H1 (cell line): ENCODE measurements at regions of chr6 and their contacts with region 1.

Region 1: GRCh38 chr6:75893058-75893775 is 144.2 kb downstream of the MYO6 start:
- DNase-seq: no peak
- H3K4me3 ChIP-seq: no peak overlapping the region
- H3K27ac ChIP-seq: no peak overlapping the region
- H3K4me1 ChIP-seq: no peaks in the 10 kb centered on the region
- H3K27me3 ChIP-seq: no peaks in the 10 kb centered on the region
- CTCF ChIP-seq: peak in 2 of 3 experiments; percentile 37 to 68; a peak in 2 of 4 replicates
- EP300 ChIP-seq: no peak
- POLR2A ChIP-seq: no peak
- RAD21 ChIP-seq: peak; percentile 80 to 84

Region 2: DNA sequence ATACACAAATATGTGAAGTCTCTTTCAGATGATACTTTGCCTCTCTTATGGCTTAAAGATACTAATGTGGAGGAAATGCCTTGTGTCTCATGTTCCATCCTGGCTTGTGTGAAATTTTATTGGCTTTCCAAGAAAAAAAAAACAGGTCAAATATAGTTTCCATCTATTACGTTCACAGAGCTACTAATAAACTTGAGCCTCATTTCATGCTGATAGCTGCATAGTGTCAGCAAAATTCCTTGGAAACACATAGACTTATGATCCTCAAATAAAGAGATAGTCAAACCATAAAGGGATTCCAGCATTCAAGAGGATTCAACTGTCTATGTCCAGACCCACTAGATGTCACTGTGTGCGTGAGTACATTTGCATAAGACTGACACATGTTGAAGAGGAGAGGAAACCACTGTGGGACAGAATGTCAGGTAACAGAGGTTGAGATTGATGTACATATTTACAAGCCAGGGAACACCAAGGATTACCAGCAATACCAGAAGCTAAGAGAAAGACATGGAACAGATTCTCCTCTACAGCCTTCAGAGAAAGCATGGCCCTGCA is 954.0 kb before region 1 on chr6:
- CTCF ChIA-PET with region 1: no interaction called
- POLR2A ChIA-PET with region 1: no interaction called
- DNase-seq: no peak
- H3K4me3 ChIP-seq: no peak overlapping the region
- H3K27ac ChIP-seq: no peak overlapping the region
- H3K4me1 ChIP-seq: no peaks in the 10 kb centered on the region
- H3K27me3 ChIP-seq: no peaks in the 10 kb centered on the region
- CTCF ChIP-seq: no peak
- EP300 ChIP-seq: no peak
- POLR2A ChIP-seq: no peak
- RAD21 ChIP-seq: no peak

Region 3: GRCh38 chr6:75874224-75874623 is 19.0 kb before region 1 on chr6:
- CTCF ChIA-PET with region 1: interaction called, 18 read pairs
- POLR2A ChIA-PET with region 1: no interaction called
- DNase-seq: no peak
- H3K4me3 ChIP-seq: no peak overlapping the region
- H3K27ac ChIP-seq: no peak overlapping the region
- H3K4me1 ChIP-seq: peaks cover 0 to 7% (median 0%) of the 10 kb centered on the region in 4 experiments; a peak in 1 of 7 replicates
- H3K27me3 ChIP-seq: no peaks in the 10 kb centered on the region
- CTCF ChIP-seq: no peak
- EP300 ChIP-seq: no peak
- POLR2A ChIP-seq: no peak
- RAD21 ChIP-seq: no peak

Region 4: GRCh38 chr6:75906871-75907270 is 13.7 kb after region 1 on chr6:
- CTCF ChIA-PET with region 1: interaction called, 22 read pairs
- POLR2A ChIA-PET with region 1: interaction called, 3 read pairs
- DNase-seq: no peak
- H3K4me3 ChIP-seq: no peak overlapping the region
- H3K27ac ChIP-seq: no peak overlapping the region
- H3K4me1 ChIP-seq: no peaks in the 10 kb centered on the region
- H3K27me3 ChIP-seq: no peaks in the 10 kb centered on the region
- CTCF ChIP-seq: no peak
- EP300 ChIP-seq: no peak
- POLR2A ChIP-seq: no peak
- RAD21 ChIP-seq: no peak

Region 5: DNA sequence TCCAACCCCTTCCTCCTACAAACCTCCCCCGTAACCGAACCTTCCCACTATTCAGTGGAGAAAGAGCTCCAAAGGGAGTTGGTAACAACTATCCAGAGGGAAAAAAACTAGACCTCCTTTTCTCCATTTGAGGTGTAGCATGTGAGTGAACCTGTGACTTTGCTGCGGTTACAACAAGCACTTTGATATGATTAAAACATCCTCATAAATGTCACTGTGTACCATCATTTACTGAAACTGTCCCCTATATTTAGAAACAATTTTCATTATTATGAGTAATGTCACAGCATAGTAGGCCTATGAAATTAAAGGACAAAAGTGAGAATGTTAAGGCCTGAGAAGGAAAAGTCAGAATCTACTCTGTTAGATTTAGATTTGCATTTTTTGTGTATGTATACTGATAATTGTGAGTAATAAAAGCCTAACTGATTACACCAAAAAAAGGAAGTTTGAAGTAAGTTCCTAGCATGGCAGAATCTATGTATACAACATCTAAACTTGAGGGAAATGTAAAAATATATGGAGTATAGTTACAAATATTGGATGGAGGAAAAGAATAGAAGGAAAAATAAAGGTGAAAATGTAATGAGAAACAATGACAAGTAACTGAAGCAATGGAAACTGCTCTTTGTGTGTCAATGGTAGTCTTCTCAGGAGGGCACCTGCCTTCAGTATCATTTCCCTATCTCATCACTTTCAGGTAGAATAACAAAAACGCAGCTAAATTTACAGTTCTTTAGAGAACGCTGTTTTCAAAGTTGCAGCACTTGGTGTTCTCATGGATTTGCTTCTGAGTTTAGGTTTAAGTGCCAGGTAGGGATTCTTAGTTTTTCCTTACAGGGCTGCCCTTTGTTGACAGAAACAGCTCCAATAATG is 33.3 kb after region 1 on chr6:
- CTCF ChIA-PET with region 1: interaction called, 84 read pairs
- POLR2A ChIA-PET with region 1: no interaction called
- DNase-seq: no peak
- H3K4me3 ChIP-seq: no peak overlapping the region
- H3K27ac ChIP-seq: no peak overlapping the region
- H3K4me1 ChIP-seq: peaks cover 0 to 3% (median 0%) of the 10 kb centered on the region in 4 experiments; a peak in 1 of 7 replicates
- H3K27me3 ChIP-seq: no peaks in the 10 kb centered on the region
- CTCF ChIP-seq: no peak
- EP300 ChIP-seq: no peak
- POLR2A ChIP-seq: no peak
- RAD21 ChIP-seq: no peak

Region 6: DNA sequence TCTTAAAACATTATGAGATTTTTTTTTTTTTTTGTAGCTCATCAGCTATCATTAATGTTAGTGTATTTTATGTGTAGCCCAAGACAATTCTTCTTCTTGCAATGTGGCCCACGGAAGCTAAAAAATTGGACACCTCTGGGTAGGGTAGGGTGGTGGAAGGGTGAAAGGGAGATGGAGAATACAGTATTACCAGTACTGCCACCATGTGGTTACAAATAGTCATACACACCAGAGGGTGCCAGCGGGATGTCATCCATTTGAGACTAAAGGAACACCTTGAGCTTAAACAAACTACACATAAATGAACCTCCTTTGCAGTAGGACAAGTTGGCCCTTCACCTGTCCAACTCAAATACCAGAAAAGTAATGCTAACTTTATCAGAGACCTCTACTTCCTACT is 968.2 kb after region 1 on chr6:
- CTCF ChIA-PET with region 1: interaction called, 10 read pairs
- POLR2A ChIA-PET with region 1: no interaction called
- DNase-seq: peak in 1 of 2 experiments; percentile 58
- H3K4me3 ChIP-seq: no peak overlapping the region
- H3K27ac ChIP-seq: no peak overlapping the region
- H3K4me1 ChIP-seq: 0 out of 7 replicates have a peak, but pooled peaks cover 0 to 2% (median 0%) of the 10 kb centered on the region in 4 experiments
- H3K27me3 ChIP-seq: no peaks in the 10 kb centered on the region
- CTCF ChIP-seq: peak in 2 of 3 experiments; percentile 50 to 64; a peak in 3 of 4 replicates
- EP300 ChIP-seq: no peak
- POLR2A ChIP-seq: no peak
- RAD21 ChIP-seq: peak; percentile 56 to 66